ENCODE measurements at regions of chr10 and their contacts with region 1.

Region 1: GRCh38 chr10:51074238-51075028 is at the start of gene PRKG1:
- ATAC-seq: peak; percentile 81 to 95 (median 90)
- H3K4me3 ChIP-seq: peak within 1 kb of the TSS; percentile 49 to 84 (median 57)
- H3K27ac ChIP-seq: peak within 1 kb of the TSS in 1 of 2 donors; percentile 54
- H3K4me1 ChIP-seq: peaks cover 8 to 14% of the 10 kb centered on the region in 2 donors
- total RNA-seq, gene PRKG1: 5.6 to 40.7 (median 6.6) TPM

Region 2: GRCh38 chr10:51422311-51423120 is 348.1 kb after region 1 on chr10:
- in situ Hi-C with region 1: loop called in 3 of 9 experiments (anchors 10 to 25 kb)
- ATAC-seq: peak in 4 of 8 experiments; percentile 59 to 92 (median 84)
- H3K4me3 ChIP-seq: no peak overlapping the region
- H3K27ac ChIP-seq: no peak overlapping the region
- H3K4me1 ChIP-seq: peaks cover 7 to 18% of the 10 kb centered on the region in 2 donors

Region 3: GRCh38 chr10:51699475-51700227 is 625.2 kb after region 1 on chr10 and contains the start of gene CSTF2T:
- in situ Hi-C with region 1: loop called in 1 of 9 experiments (anchors 25 kb)
- ATAC-seq: peak; percentile 88 to 96 (median 94)
- H3K4me3 ChIP-seq: peak within 1 kb of the TSS; percentile 53 to 95 (median 92)
- H3K27ac ChIP-seq: peak within 1 kb of the TSS; percentile 99 to 100
- H3K4me1 ChIP-seq: peaks cover 16 to 41% of the 10 kb centered on the region in 2 donors
- total RNA-seq, gene CSTF2T: 22.9 to 34.2 (median 26.9) TPM

Measured in motor neuron (in vitro differentiated cells).